ENCODE measurements at regions of chr10 and their contacts with region 1.

Region 1: DNA sequence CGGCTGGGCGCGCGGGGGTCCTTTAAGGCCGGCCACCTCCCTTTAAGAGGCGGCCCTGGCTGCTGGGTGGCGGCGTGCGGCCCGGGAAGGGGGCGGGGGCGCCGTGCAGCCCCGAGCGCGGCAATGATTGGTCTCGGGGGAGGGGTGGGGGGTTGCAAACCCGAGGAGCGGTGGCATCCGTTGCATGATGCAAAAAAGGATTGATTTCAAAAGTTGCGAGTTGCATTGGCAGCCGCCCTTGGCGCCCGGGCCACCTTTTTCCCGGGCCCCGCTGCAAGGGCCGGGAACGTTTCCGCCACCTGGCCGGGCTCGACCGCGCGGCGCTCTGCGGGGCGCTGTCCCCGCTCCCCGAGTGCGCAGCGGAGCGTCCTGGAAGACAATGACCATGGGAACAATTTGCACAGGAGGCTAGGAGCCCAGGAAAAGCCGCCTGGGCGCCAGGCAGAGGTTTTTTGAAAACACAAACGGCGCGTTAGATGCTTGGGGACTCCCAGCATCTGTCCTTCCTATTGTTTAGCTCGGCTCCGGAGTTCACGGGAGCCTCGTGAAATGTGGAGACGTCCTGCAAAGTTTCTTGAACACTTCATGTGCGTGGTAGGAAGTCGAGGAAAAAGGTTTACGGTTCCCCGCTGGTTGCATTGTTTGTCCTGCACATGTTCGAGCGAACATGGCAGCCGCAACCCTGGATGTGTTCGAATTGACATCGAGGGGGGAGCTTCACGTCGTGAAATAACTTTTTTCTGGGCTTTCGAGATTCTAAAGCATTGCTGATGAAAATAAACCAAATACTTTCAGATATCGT is at the start of gene SEPHS1:
- DNase-seq: peak; percentile 81
- ATAC-seq: peak; percentile 69
- H3K4me3 ChIP-seq: peak within 1 kb of the TSS; percentile 55 to 87 (median 82)
- H3K4me3 Mint-ChIP-seq: peak within 1 kb of the TSS; percentile 92
- H3K27ac ChIP-seq: peak within 1 kb of the TSS; percentile 54 to 82
- H3K27ac Mint-ChIP-seq: peak within 1 kb of the TSS; percentile 93
- H3K4me1 ChIP-seq: peaks cover 26 to 38% of the 10 kb centered on the region in 2 donors
- H3K4me1 Mint-ChIP-seq: peaks cover 58% of the 10 kb centered on the region
- H3K27me3 ChIP-seq: peaks cover 0 to 30% (median 7%) of the 10 kb centered on the region in 4 experiments
- H3K27me3 Mint-ChIP-seq: peaks cover 4% of the 10 kb centered on the region
- CTCF ChIP-seq: no peak
- total RNA-seq, gene SEPHS1: 25.3 and 29.1 TPM in 2 replicates

Region 2: GRCh38 chr10:12228851-12229250 is 1119.6 kb before region 1 on chr10:
- CTCF ChIA-PET with region 1: no interaction called
- POLR2A ChIA-PET with region 1: no interaction called
- intact Hi-C with region 1: no loop called
- DNase-seq: no peak
- ATAC-seq: no peak
- H3K4me3 ChIP-seq: no peak overlapping the region
- H3K4me3 Mint-ChIP-seq: no peak overlapping the region
- H3K27ac ChIP-seq: no peak overlapping the region
- H3K27ac Mint-ChIP-seq: no peak overlapping the region
- H3K4me1 ChIP-seq: no peaks in the 10 kb centered on the region
- H3K4me1 Mint-ChIP-seq: no peaks in the 10 kb centered on the region
- H3K27me3 ChIP-seq: no peaks in the 10 kb centered on the region
- H3K27me3 Mint-ChIP-seq: no peaks in the 10 kb centered on the region
- CTCF ChIP-seq: no peak

Region 3: GRCh38 chr10:13160934-13161856 is 187.2 kb before region 1 on chr10 and contains the start of gene MCM10:
- CTCF ChIA-PET with region 1: interaction called, 41 read pairs
- POLR2A ChIA-PET with region 1: no interaction called
- intact Hi-C with region 1: loop called (anchors 1 kb)
- DNase-seq: peak; percentile 97
- ATAC-seq: peak; percentile 100
- H3K4me3 ChIP-seq: peak within 1 kb of the TSS; percentile 34 to 82 (median 63)
- H3K4me3 Mint-ChIP-seq: peak within 1 kb of the TSS; percentile 93
- H3K27ac ChIP-seq: peak within 1 kb of the TSS in 1 of 2 donors; percentile 54
- H3K27ac Mint-ChIP-seq: peak within 1 kb of the TSS; percentile 81
- H3K4me1 ChIP-seq: peaks cover 10 to 12% of the 10 kb centered on the region in 2 donors
- H3K4me1 Mint-ChIP-seq: peaks cover 14% of the 10 kb centered on the region
- H3K27me3 ChIP-seq: no peaks in the 10 kb centered on the region
- H3K27me3 Mint-ChIP-seq: no peaks in the 10 kb centered on the region
- CTCF ChIP-seq: peak; percentile 89
- total RNA-seq, gene MCM10: 0.15 and 0.42 TPM in 2 replicates

Region 4: DNA sequence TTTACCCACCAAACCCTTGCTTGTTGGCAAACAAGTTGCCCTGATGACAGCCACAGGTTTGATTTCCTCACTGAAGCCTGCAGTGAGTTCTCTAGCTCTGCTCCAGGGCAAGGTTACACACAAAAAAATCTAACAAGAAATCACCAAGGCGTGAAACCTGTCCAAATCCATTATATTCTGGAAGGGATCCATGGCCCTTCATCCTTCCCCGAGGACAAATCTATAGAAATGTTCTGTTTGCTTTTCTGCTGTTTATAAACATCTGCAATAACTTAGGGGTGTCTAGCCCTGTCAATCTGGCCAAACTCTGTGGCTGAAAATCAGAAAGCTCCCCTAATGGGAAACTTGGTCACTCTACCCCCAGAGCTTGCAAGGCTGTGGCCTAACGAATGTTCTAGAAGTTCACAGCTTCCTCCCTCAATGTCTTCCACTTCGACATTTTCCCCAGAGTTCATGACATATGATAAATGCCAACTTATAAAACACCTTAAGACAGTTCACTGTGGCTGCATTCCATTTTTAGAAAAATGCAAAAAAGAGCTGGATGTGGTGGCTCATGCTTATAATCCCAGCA is 402.9 kb after region 1 on chr10:
- CTCF ChIA-PET with region 1: no interaction called
- POLR2A ChIA-PET with region 1: no interaction called
- intact Hi-C with region 1: no loop called
- DNase-seq: no peak
- ATAC-seq: no peak
- H3K4me3 ChIP-seq: no peak overlapping the region
- H3K4me3 Mint-ChIP-seq: no peak overlapping the region
- H3K27ac ChIP-seq: no peak overlapping the region
- H3K27ac Mint-ChIP-seq: no peak overlapping the region
- H3K4me1 ChIP-seq: no peaks in the 10 kb centered on the region
- H3K4me1 Mint-ChIP-seq: no peaks in the 10 kb centered on the region
- H3K27me3 ChIP-seq: peaks cover 0 to 3% (median 0%) of the 10 kb centered on the region in 4 experiments
- H3K27me3 Mint-ChIP-seq: no peaks in the 10 kb centered on the region
- CTCF ChIP-seq: no peak

Measured in B cell (primary cell).